Common myeloid progenitor, CD34-positive (primary cell): ENCODE measurements at regions of chr14 and their contacts with region 1.

Region 1: GRCh38 chr14:106586098-106586704 is 1059.8 kb downstream of the TMEM121 start:
- DNase-seq: peak; percentile 35 to 63 (median 53)
- H3K4me3 ChIP-seq: no peak overlapping the region
- H3K27ac ChIP-seq: no peak overlapping the region
- H3K4me1 ChIP-seq: peaks cover 0 to 19% (median 10%) of the 10 kb centered on the region in 4 experiments
- H3K27me3 ChIP-seq: peaks cover 0 to 2% (median 0%) of the 10 kb centered on the region in 5 experiments

Region 2: DNA sequence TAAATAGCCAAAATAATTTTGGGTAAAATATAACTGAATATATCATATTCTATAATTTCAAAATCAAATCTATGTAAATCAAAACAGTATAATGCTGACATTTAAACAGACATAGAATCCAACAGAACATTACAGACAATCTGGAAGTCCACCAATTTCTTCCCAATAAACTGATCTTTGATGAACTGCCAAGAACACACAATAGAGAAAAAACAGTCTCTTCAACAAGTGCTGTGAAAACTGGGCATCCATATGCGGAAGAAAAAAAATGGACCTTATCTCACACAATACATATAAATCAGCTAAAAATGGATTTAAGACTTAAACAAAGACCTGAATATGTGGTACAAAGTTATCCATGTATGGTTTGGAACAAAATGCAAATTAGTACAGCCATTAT is 37.1 kb before region 1 on chr14:
- CTCF ChIA-PET with region 1: no interaction called
- POLR2A ChIA-PET with region 1: no interaction called
- DNase-seq: no peak
- H3K4me3 ChIP-seq: no peak overlapping the region
- H3K27ac ChIP-seq: no peak overlapping the region
- H3K4me1 ChIP-seq: peaks cover 0 to 7% (median 1%) of the 10 kb centered on the region in 4 experiments
- H3K27me3 ChIP-seq: peaks cover 0 to 8% (median 2%) of the 10 kb centered on the region in 5 experiments

Region 3: DNA sequence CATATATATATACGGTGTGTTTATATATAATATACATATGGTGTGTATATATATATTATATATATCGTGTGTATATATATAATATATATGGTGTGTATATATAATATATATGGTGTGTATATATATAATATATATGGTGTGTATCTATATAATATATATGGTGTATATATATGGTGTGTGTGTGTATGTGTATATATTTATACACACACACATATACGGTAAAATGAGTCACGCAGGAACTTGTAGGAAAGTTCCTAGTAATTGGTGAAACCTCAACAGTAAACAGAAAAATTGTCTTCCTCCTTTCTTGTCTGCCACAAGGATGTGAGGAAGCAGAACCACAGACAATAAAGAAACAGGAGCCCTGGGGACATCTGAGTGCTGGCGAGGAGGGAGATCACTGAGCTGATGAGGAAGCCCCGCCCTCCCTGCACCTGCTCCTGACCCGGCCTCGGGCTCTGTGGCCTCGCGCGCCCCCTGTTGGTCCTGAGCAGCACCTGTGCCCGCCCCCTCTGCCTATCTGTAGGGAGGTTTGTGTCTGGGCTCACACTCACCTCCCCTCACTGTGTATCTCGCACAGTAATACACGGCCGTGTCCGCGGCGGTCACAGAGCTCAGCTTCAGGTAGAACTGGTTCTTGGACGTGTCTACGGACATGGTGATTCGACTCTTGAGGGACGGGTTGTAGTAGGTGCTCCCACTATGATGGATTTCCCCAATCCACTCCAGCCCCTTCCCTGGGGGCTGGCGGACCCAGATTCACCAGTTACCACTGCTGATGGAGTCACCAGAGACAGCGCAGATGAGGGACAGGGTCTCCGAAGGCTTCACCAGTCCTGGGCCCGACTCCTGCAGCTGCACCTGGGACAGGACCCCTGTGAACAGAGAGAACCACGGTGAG is 19.6 kb after region 1 on chr14:
- CTCF ChIA-PET with region 1: interaction called, 25 read pairs
- POLR2A ChIA-PET with region 1: no interaction called
- DNase-seq: peak; percentile 71 to 87 (median 84)
- H3K4me3 ChIP-seq: no peak overlapping the region
- H3K27ac ChIP-seq: no peak overlapping the region
- H3K4me1 ChIP-seq: peaks cover 0 to 10% (median 4%) of the 10 kb centered on the region in 4 experiments
- H3K27me3 ChIP-seq: peaks cover 0 to 38% (median 9%) of the 10 kb centered on the region in 5 experiments

Region 4: GRCh38 chr14:106613256-106613655 is 27.1 kb after region 1 on chr14:
- CTCF ChIA-PET with region 1: interaction called, 10 read pairs
- POLR2A ChIA-PET with region 1: no interaction called
- DNase-seq: no peak
- H3K4me3 ChIP-seq: no peak overlapping the region
- H3K27ac ChIP-seq: no peak overlapping the region
- H3K4me1 ChIP-seq: no peaks in the 10 kb centered on the region
- H3K27me3 ChIP-seq: peaks cover 0 to 24% (median 8%) of the 10 kb centered on the region in 5 experiments